ENCODE measurements at regions of chr17 and their contacts with region 1.

Region 1: DNA sequence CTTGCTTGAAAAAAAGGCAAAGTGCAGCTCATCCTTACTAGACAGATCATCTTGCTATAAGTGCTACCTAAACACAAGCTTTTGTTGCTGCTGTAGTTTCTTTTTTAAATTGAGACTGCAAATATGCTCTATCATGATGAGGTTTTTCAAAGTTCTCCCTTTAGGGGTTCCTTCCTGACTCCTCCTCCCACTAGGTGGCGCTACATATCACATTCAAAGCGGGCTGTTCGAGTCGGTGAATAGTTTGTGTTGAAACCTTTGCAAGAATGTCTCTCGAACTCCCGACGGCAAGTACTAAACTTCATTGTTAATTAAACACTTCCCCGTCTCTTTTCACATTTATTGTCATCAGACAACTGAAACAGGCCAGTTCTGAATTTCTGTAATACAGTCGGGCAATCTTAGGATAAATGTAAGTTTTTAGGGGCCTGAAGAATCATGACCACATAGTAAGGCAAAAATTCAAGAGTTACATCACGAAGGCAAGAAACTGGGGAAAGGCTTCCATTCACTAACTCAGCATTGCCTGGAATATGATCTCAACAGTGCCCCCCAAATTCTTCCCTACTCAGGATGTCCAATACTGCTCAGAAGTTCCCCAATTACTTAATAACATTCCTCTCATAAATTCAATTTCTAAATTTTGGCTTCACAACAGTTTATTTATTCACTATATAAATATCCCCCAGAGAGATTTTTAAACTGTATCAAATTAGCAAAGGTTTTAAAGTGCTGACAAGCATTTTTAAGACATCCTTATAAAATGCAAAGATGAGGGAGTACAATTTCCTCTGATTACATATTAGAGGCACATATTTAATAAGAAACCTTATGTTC is 6.7 kb downstream of the HS3ST3A1 start:
- DNase-seq: peak; percentile 41
- ATAC-seq: peak; percentile 74

Region 2: DNA sequence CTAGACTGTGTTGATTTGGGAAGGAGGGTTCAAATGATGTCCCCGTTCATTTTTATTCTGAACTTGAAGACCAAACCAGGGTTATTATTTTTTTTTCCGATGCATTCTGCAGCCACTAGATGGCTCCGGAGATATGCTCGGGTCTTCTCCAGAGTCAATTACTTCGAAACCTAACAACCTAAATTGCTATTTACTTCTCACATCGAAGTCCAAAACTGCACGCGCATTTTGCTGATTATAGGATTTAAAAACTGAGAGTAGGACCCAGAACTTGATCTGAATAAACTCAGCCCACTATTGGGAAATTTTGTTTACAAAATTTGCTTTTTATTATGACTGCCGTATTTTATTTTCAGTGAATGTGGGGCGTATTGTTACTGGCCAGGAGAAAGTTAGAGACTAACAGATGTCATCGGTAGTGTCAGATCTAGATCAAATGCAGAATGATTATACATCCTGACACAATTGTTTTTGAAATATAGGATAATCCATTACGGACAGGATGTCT is 257.1 kb before region 1 on chr17:
- intact Hi-C with region 1: loop called (anchors 5 kb)
- DNase-seq: no peak
- ATAC-seq: peak; percentile 66

Region 3: DNA sequence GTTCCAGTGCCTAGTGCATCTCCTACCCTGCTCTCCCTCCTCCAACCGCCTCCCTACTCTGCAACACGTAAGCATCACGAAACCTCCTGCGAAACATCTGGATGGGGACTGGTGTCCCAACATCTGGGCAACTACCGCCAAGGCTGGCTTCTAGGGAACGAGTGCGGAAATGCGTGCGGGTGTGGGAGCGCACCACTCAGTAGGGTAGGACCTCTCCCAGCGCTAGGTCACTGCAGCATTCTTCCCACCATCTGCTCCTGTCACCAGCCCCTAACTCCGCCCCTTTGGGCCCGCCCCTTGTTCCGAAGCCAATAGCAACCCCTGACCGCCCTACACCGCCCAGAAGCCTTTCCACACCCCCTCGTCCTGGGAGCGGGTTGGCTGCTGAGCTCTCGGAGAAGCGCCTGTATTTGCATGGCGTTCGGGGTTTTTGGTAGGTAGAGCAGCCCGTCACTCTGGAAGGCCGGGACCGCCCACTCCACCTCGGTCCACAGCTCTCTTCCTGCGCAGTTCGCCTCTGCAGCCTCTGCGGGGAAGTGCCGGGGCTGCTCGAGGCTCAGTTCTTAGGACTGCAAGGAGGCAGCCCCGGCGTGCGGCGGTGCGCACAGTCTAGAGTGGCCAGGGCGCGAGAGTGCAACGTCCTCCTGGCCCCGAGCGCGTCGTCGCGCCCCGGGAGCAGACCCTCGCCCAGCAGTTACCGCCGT is 705.7 kb after region 1 on chr17 and contains the start of gene HS3ST3B1:
- intact Hi-C with region 1: loop called (anchors 5 kb)
- DNase-seq: peak; percentile 98
- ATAC-seq: peak; percentile 93
- total RNA-seq, gene HS3ST3B1: 1.7 TPM

Region 4: DNA sequence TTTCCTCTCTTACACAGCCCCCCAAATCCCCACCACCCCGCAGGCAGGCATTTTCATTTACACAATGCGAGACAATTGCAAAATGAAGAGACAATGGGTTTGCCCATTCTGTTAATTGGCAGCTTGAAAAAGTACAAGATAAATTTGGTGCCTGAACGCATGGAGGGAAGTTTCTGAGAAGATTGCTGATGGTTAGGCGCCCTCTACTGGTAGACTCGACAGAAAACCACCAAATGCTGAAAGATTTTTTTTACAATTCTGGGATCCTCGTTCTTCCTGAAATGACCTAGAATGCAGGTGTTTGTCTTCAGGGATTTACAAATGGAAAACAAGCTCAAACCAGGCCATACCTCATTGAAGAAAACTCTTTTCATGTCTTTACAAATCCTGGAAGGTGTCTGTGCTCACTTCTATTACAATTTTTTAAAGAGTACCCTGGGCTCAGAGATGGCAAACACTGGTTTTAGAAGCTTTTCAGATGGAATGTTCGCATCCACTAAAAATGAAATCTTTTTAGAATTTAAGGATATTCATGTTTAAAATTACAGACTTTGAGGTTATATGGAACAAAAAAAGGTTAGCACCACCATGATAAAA is 1331.6 kb after region 1 on chr17:
- intact Hi-C with region 1: loop called (anchors 5 kb)
- DNase-seq: no peak
- ATAC-seq: no peak